ENCODE measurements at regions of chr14 and their contacts with region 1.

Region 1: GRCh38 chr14:51582437-51582836 is 69.3 kb upstream of the FRMD6 start:
- DNase-seq: no peak
- H3K4me3 ChIP-seq: no peak overlapping the region
- H3K27me3 ChIP-seq: no peaks in the 10 kb centered on the region
- CTCF ChIP-seq: no peak

Region 2: GRCh38 chr14:51521764-51522163 is 60.7 kb before region 1 on chr14:
- CTCF ChIA-PET with region 1: no interaction called
- POLR2A ChIA-PET with region 1: no interaction called
- DNase-seq: peak; percentile 53
- H3K4me3 ChIP-seq: no peak overlapping the region
- H3K27me3 ChIP-seq: no peaks in the 10 kb centered on the region
- CTCF ChIP-seq: no peak

Region 3: DNA sequence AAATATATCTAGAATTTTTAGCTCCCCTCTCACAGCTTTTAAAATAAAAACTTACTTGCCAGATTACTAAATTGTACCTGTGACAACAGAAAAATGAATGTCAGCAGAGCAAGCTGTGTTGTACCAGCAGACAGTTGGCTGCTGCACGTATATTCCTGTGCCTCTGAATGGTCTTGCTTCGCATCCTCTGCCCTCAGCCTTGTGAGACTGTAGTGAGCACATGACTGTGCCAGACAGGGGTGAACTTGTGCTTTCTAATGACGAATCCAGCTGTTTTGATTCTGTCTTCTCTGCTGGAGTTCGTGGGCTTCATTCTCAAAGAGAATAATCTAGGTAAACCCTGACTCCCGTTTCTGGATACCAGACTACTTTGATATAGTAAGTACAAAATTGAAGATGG is 11.0 kb after region 1 on chr14:
- CTCF ChIA-PET with region 1: interaction called, 14 read pairs
- POLR2A ChIA-PET with region 1: no interaction called
- DNase-seq: no peak
- H3K4me3 ChIP-seq: no peak overlapping the region
- H3K27me3 ChIP-seq: no peaks in the 10 kb centered on the region
- CTCF ChIP-seq: no peak